Activated CD8-positive, alpha-beta T cell treated with anti-CD3 and anti-CD28 coated beads, Interleukin-2, amount 10 ng/mL, durations not matched to agents 7 days and 5 days (primary cell): ENCODE measurements at regions of chr16 and their contacts with region 1.

Region 1: GRCh38 chr16:30458561-30459394 is 13.1 kb upstream of the SEPHS2 start:
- DNase-seq: peak; percentile 95
- ATAC-seq: peak; percentile 97
- H3K4me3 Mint-ChIP-seq: peak overlapping the region; percentile 71
- H3K27ac Mint-ChIP-seq: peak overlapping the region; percentile 98
- H3K4me1 Mint-ChIP-seq: peaks cover 74% of the 10 kb centered on the region
- H3K27me3 Mint-ChIP-seq: no peaks in the 10 kb centered on the region

Region 2: DNA sequence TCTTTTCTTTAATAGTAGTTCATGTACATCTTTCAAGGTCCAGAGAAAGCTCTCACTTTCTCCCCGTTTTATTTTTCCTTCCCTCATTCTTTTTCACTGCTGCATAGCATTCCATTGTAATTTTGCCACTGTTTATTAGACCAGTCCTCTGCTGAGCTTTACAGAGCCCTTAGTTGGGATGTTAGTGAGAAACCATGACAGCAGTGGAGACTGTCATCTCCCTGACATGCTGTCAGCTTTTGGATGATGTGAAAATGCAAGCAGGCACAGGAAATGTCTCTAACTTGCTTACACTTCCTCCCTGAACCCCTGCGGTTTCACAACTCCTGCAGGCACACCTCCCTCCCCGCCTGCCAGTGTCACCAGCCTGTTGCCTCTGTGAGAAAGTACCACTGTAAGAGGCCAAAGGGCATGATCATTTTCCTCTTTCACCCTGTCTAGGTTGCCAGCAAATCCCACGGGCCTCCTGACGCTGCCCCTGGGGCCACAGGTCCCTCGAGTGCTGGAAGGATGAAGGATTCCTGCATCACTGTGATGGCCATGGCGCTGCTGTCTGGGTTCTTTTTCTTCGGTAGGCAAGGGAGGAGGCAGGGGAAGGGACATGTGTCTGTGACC is 13.7 kb after region 1 on chr16 and contains the start of gene ITGAL:
- CTCF ChIA-PET with region 1: interaction called, 95 read pairs
- POLR2A ChIA-PET with region 1: interaction called, 206 read pairs
- DNase-seq: peak; percentile 92
- ATAC-seq: peak; percentile 85
- H3K4me3 Mint-ChIP-seq: peak within 1 kb of the TSS; percentile 98
- H3K27ac Mint-ChIP-seq: peak within 1 kb of the TSS; percentile 96
- H3K4me1 Mint-ChIP-seq: peaks cover 61% of the 10 kb centered on the region
- H3K27me3 Mint-ChIP-seq: no peaks in the 10 kb centered on the region
- total RNA-seq, gene ITGAL: 458 to 471 TPM